Stomach (tissue), 19 donors: ENCODE measurements at regions of chr1 and their contacts with region 1.

Region 1: GRCh38 chr1:183471743-183472487 is 384 bp upstream of the SMG7 start:
- DNase-seq: peak; percentile 94 to 98
- H3K4me3 ChIP-seq: peak overlapping the region; percentile 87 to 97 (median 94)
- H3K27ac ChIP-seq: peak overlapping the region; percentile 93 to 96 (median 95)
- H3K4me1 ChIP-seq: peaks cover 20 to 48% (median 35%) of the 10 kb centered on the region in 4 donors
- H3K27me3 ChIP-seq: no peaks in the 10 kb centered on the region
- CTCF ChIP-seq: peak in 1 of 7 experiments; percentile 27
- EP300 ChIP-seq: no peak
- POLR2A ChIP-seq: no peak

Region 2: DNA sequence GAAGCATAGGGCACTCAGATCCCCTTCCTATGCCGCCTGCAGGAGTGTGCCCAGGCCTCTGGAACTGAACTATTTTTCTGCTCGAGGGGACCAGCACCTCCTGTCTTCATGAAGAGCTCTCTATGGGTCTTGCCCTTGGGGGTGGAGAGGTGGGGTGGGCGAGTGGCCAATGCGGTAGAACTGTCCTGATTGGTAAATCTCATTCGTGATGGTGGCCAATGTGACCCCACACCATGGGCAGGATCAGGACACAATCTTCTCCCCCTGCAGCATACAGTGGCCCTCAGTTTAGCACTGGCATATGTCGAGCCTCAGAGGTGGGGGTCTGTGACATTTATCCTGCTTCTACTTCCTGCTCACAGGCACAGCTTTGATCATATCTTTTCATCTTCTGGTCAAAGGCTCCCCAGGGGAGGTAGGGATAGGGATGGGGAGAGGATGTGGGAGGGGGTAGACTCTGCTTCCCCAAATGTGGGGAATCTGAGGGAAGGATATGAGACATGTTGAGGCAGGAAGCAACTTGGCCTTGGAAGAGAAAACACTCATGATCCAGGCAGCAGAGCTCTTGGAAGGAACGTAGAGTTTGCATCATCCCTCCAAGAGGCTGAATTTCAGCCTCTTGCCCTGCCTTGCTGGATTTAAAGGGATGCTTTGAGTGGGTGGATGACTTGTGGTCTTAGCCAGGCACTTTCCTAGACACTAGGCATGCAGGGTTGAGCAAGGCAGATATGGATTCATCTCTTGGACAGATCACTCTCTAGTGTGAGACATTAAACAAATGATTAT is 204.1 kb before region 1 on chr1:
- intact Hi-C with region 1: no loop called
- DNase-seq: no peak
- H3K4me3 ChIP-seq: no peak overlapping the region
- H3K27ac ChIP-seq: peak overlapping the region in 3 of 5 donors; percentile 19 to 31 (median 31)
- H3K4me1 ChIP-seq: peaks cover 0 to 3% (median 0%) of the 10 kb centered on the region in 4 donors
- H3K27me3 ChIP-seq: no peaks in the 10 kb centered on the region
- CTCF ChIP-seq: no peak
- EP300 ChIP-seq: no peak
- POLR2A ChIP-seq: no peak

Region 3: DNA sequence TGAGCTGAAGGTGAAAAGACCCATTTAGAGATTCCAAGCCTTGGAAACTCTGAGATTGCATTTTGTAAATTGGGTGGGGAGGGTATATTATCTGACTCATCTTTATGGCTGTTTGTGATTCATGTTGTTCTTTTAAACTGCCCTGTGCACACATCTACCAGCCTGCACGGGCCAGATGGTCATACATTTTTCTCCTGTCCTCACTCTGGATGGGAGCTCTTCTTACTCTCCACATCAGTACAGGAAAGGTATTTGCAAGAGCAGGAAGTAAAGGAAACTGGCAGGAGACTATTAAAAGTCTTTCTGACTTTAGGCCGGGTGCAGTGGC is 39.4 kb before region 1 on chr1:
- intact Hi-C with region 1: no loop called
- DNase-seq: no peak
- H3K4me3 ChIP-seq: no peak overlapping the region
- H3K27ac ChIP-seq: no peak overlapping the region
- H3K4me1 ChIP-seq: no peaks in the 10 kb centered on the region
- H3K27me3 ChIP-seq: peaks cover 0 to 13% (median 0%) of the 10 kb centered on the region in 3 donors
- CTCF ChIP-seq: no peak
- EP300 ChIP-seq: no peak
- POLR2A ChIP-seq: no peak

Region 4: GRCh38 chr1:183520379-183520778 is 48.5 kb after region 1 on chr1:
- intact Hi-C with region 1: loop called (anchors 10 kb)
- DNase-seq: no peak
- H3K4me3 ChIP-seq: no peak overlapping the region
- H3K27ac ChIP-seq: no peak overlapping the region
- H3K4me1 ChIP-seq: peaks cover 0 to 5% (median 1%) of the 10 kb centered on the region in 4 donors
- H3K27me3 ChIP-seq: no peaks in the 10 kb centered on the region
- CTCF ChIP-seq: no peak
- EP300 ChIP-seq: no peak
- POLR2A ChIP-seq: no peak

Region 5: DNA sequence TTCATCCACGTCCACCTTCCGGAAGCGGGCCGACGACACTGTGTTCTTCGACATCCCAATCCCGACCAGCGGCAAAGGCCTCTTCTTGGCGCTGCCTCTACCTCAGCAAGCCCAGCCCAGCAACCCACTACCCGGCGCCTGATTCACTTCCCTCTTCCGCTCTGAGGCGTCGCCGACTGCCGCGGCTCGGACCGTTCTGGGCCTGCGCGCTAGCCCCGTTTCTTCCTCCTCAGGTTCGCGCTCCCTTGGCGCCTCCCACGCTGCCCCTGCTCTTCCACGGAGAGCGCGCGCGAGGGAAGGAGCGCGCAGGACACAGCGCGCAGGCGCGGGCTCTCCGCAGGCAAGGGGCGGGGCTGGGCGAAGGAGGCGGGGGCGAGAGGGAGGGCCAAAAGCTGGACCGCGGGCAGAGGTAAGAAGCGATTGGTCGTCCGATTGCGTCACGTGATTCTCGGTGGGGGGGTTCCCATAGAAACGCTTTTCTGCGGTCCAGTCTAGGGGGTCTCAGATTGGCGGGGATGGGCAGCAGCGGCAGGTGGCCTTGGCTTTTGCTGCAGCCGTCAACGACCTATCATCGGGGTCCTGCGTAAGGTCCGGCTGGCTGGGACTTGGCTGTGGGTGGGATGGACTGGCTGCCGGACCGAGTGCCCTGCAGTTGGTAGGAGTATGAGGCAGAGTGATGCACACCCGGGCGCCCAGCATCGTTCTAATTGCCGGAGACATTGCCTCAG is 163.9 kb after region 1 on chr1 and contains the start of gene ARPC5:
- intact Hi-C with region 1: loop called (anchors 10 kb)
- DNase-seq: peak; percentile 96 to 99
- H3K4me3 ChIP-seq: peak within 1 kb of the TSS; percentile 73 to 93 (median 85)
- H3K27ac ChIP-seq: peak within 1 kb of the TSS; percentile 90 to 97 (median 96)
- H3K4me1 ChIP-seq: peaks cover 33 to 51% (median 39%) of the 10 kb centered on the region in 4 donors
- H3K27me3 ChIP-seq: no peaks in the 10 kb centered on the region
- CTCF ChIP-seq: no peak
- EP300 ChIP-seq: no peak
- POLR2A ChIP-seq: peak in 2 of 4 donors; percentile 75 to 93
- total RNA-seq, gene ARPC5: 26.3 to 101 (median 73.7) TPM